ENCODE measurements at regions of chr13 and their contacts with region 1.

Region 1: DNA sequence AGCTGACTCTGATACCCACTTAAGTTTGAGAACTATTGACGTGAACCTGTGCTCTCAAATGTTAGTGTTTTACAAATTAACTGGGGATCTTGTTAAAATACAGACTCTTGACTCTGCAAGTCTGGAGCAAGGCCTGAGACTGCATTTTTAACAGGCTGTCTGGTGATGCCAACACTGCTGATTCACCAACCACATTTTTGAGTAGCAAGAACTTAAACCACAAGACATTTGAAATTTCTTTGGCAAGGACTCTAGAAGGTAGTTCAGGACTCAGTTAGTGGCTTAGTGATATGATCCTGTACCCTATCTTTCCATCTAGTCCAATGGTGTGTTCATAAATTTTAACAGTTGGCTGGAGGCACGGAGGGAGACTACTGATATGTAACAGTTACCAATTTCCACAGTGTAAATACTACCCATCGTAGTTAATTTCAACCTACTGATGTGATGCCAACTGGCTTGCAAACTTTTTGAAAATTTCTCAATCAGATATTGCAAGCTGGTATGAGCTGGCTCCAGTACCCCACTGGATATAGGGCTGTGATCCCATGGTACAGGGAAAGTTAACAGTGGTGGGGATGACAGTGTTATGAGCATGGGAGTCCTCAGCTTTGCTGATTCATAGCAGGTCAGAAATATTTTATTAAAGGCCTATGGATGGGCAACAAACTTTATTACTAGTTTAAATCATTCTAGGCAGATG is 255.1 kb downstream of the TBC1D4 start:
- DNase-seq: no peak
- ATAC-seq: no peak
- H3K4me3 ChIP-seq: no peak overlapping the region
- H3K27ac ChIP-seq: no peak overlapping the region
- H3K4me1 ChIP-seq: no peaks in the 10 kb centered on the region; a peak in 1 of 5 replicates
- H3K27me3 ChIP-seq: no peaks in the 10 kb centered on the region
- CTCF ChIP-seq: no peak
- EP300 ChIP-seq: no peak
- POLR2A ChIP-seq: no peak
- RAD21 ChIP-seq: no peak

Region 2: DNA sequence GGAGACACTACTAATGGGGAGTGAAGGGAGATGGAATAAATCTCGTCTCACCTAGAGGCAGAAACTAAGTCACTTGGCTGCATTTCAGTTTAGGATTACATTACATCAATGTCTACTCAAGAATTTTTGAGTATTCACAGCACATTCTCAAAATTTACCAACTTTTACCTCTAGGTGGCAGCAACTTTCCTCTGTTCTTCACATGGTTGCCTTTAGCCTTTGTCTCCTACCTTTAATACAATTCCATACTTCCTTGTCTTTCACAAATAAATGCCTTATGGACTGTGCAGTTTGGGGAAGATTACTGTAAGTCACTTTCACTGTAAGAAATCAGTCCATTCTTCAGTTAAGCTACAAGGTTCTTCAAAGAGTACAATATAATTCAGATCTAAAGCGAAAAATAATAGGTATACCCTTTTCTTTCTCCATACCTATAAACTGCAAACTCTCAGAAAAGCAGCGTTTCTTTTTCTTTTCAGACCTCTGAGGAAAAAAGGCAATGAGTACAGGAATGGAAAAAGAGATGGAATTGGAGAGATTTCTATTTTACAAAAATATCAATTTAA is 1472.1 kb before region 1 on chr13:
- CTCF ChIA-PET with region 1: no interaction called
- POLR2A ChIA-PET with region 1: no interaction called
- in situ Hi-C with region 1: loop called (anchors 25 kb)
- intact Hi-C with region 1: no loop called
- DNase-seq: peak; percentile 12 to 29 (median 13)
- ATAC-seq: peak; percentile 74
- H3K4me3 ChIP-seq: no peak overlapping the region
- H3K27ac ChIP-seq: no peak overlapping the region
- H3K4me1 ChIP-seq: no peaks in the 10 kb centered on the region
- H3K27me3 ChIP-seq: no peaks in the 10 kb centered on the region
- CTCF ChIP-seq: peak; percentile 21 to 56 (median 54); a peak in 5 of 6 replicates
- EP300 ChIP-seq: no peak
- POLR2A ChIP-seq: no peak
- RAD21 ChIP-seq: peak; percentile 39 to 64

Region 3: GRCh38 chr13:74867460-74867859 is 359.4 kb before region 1 on chr13:
- CTCF ChIA-PET with region 1: no interaction called
- POLR2A ChIA-PET with region 1: no interaction called
- in situ Hi-C with region 1: no loop called
- intact Hi-C with region 1: no loop called
- DNase-seq: no peak
- ATAC-seq: no peak
- H3K4me3 ChIP-seq: no peak overlapping the region
- H3K27ac ChIP-seq: no peak overlapping the region
- H3K4me1 ChIP-seq: no peaks in the 10 kb centered on the region; a peak in 1 of 5 replicates
- H3K27me3 ChIP-seq: no peaks in the 10 kb centered on the region
- CTCF ChIP-seq: no peak
- EP300 ChIP-seq: no peak
- POLR2A ChIP-seq: no peak
- RAD21 ChIP-seq: no peak